Mammary epithelial cell (primary cell): ENCODE measurements at regions of chr3 and their contacts with region 1.

Region 1: DNA sequence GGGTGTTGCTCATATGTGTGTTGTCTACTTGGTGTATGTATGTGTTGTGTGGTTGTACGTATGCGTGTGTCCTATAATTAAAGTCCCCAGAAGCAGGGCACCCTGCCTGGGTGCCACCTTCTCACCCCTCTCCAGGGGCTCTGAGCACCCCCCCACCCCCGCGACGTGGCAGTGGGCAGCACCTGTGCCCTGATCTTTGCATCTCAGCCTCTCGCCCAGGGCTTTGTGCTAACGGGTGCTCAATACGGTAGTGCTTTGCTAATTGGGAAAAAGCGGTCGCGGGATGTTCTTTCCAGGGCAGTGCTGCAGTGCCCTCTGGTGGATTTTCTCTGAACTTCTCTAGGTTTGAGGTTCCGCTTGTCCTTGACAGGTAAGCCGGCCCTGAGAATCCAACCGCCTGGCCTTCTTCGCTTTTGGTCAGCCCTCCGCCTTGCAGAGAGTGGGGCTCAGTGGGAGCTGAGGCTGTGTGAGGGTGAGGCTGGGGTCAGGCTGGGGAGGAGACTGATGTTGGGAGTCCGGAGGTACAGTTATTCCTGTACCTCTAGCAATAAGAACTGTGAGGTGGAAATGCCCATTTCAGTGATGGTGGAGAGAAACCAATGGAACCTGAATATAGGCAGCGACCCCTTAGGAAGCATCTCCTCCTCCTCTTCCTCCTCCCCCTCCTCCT is 17.6 kb upstream of the EPHB3 start:
- DNase-seq: peak; percentile 72
- H3K4me3 ChIP-seq: no peak overlapping the region
- H3K27ac ChIP-seq: no peak overlapping the region
- H3K4me1 ChIP-seq: peaks cover 2% of the 10 kb centered on the region
- H3K27me3 ChIP-seq: no peaks in the 10 kb centered on the region
- CTCF ChIP-seq: peak; percentile 84 to 86

Region 2: GRCh38 chr3:184443380-184443779 is 100.6 kb before region 1 on chr3:
- CTCF ChIA-PET with region 1: no interaction called
- dilution Hi-C with region 1: loop called (anchors 5 kb)
- in situ Hi-C with region 1: no loop called
- intact Hi-C with region 1: no loop called
- DNase-seq: peak; percentile 39
- H3K4me3 ChIP-seq: no peak overlapping the region
- H3K27ac ChIP-seq: no peak overlapping the region
- H3K4me1 ChIP-seq: peaks cover 9% of the 10 kb centered on the region
- H3K27me3 ChIP-seq: no peaks in the 10 kb centered on the region
- CTCF ChIP-seq: no peak

Region 3: GRCh38 chr3:184513276-184514170 is 30.5 kb before region 1 on chr3:
- CTCF ChIA-PET with region 1: no interaction called
- dilution Hi-C with region 1: no loop called
- in situ Hi-C with region 1: no loop called
- intact Hi-C with region 1: loop called (anchors 1 kb)
- DNase-seq: peak; percentile 63
- H3K4me3 ChIP-seq: peak overlapping the region; percentile 41 to 62 (median 54)
- H3K27ac ChIP-seq: no peak overlapping the region
- H3K4me1 ChIP-seq: peaks cover 6% of the 10 kb centered on the region
- H3K27me3 ChIP-seq: peaks cover 3% of the 10 kb centered on the region
- CTCF ChIP-seq: peak; percentile 63 to 85

Region 4: GRCh38 chr3:184848934-184849333 is 305.0 kb after region 1 on chr3:
- CTCF ChIA-PET with region 1: no interaction called
- dilution Hi-C with region 1: no loop called
- in situ Hi-C with region 1: no loop called
- intact Hi-C with region 1: no loop called
- DNase-seq: no peak
- H3K4me3 ChIP-seq: no peak overlapping the region
- H3K27ac ChIP-seq: no peak overlapping the region
- H3K4me1 ChIP-seq: peaks cover under 1% of the 10 kb centered on the region
- H3K27me3 ChIP-seq: no peaks in the 10 kb centered on the region
- CTCF ChIP-seq: no peak